Panc1 (cell line): ENCODE measurements at regions of chr5 and their contacts with region 1.

Region 1: GRCh38 chr5:159987031-159987674 is 21.8 kb upstream of the TTC1 start:
- DNase-seq: no peak
- ATAC-seq: peak; percentile 97
- H3K4me3 ChIP-seq: peak overlapping the region; percentile 40 to 63
- H3K27ac ChIP-seq: no peak overlapping the region
- H3K4me1 ChIP-seq: no peaks in the 10 kb centered on the region
- H3K27me3 ChIP-seq: no peaks in the 10 kb centered on the region; the same call in 1 of the 2 replicates
- CTCF ChIP-seq: peak; percentile 94

Region 2: GRCh38 chr5:159156426-159157238 is 830.5 kb before region 1 on chr5:
- CTCF ChIA-PET with region 1: no interaction called
- POLR2A ChIA-PET with region 1: no interaction called
- in situ Hi-C with region 1: no loop called
- intact Hi-C with region 1: loop called (anchors 10 kb)
- DNase-seq: peak; percentile 32
- ATAC-seq: peak; percentile 91
- H3K4me3 ChIP-seq: no peak overlapping the region
- H3K27ac ChIP-seq: no peak overlapping the region
- H3K4me1 ChIP-seq: no peaks in the 10 kb centered on the region
- H3K27me3 ChIP-seq: no peaks in the 10 kb centered on the region
- CTCF ChIP-seq: peak; percentile 84

Region 3: GRCh38 chr5:159331093-159331973 is 655.8 kb before region 1 on chr5:
- CTCF ChIA-PET with region 1: no interaction called
- POLR2A ChIA-PET with region 1: no interaction called
- in situ Hi-C with region 1: no loop called
- intact Hi-C with region 1: loop called (anchors 5 kb)
- DNase-seq: no peak
- ATAC-seq: peak; percentile 93
- H3K4me3 ChIP-seq: peak overlapping the region; percentile 42 to 49
- H3K27ac ChIP-seq: no peak overlapping the region
- H3K4me1 ChIP-seq: no peaks in the 10 kb centered on the region
- H3K27me3 ChIP-seq: peaks cover 11% of the 10 kb centered on the region
- CTCF ChIP-seq: peak; percentile 94

Region 4: GRCh38 chr5:159444441-159445082 is 542.6 kb before region 1 on chr5:
- CTCF ChIA-PET with region 1: no interaction called
- POLR2A ChIA-PET with region 1: no interaction called
- in situ Hi-C with region 1: no loop called
- intact Hi-C with region 1: loop called (anchors 2 kb)
- DNase-seq: peak; percentile 76
- ATAC-seq: peak; percentile 86
- H3K4me3 ChIP-seq: no peak overlapping the region
- H3K27ac ChIP-seq: no peak overlapping the region
- H3K4me1 ChIP-seq: no peaks in the 10 kb centered on the region; the same call in 1 of the 2 replicates
- H3K27me3 ChIP-seq: no peaks in the 10 kb centered on the region
- CTCF ChIP-seq: peak; percentile 69

Region 5: DNA sequence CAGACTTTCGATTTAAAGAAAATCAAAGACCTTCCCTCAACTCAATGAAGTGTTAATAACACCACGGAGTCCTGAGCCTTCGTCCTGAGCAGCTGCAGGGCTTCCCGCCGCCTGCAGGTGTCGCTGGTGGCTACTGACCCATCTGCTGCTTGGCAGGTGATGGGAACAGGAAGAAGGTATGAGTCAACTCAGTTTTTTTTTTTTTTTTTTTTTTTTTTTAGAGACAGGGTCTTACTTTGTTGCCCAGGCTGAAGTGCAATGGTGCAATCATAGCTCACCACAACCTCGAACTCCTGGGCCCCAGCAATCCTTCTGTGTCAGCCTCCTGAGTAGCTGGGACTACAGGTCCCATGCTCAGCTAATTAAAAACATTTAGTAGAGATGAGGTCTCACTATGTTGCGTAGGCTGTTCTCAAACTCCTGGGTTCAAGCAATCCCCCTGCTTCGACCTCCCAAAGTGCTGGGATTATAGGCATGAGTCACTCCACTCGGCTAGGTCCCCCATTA is 471.2 kb before region 1 on chr5:
- CTCF ChIA-PET with region 1: no interaction called
- POLR2A ChIA-PET with region 1: no interaction called
- in situ Hi-C with region 1: no loop called
- intact Hi-C with region 1: loop called (anchors 5 kb)
- DNase-seq: no peak
- ATAC-seq: 0 out of 2 replicates have a peak, but pooled peaks have one; percentile 75
- H3K4me3 ChIP-seq: no peak overlapping the region
- H3K27ac ChIP-seq: no peak overlapping the region
- H3K4me1 ChIP-seq: no peaks in the 10 kb centered on the region
- H3K27me3 ChIP-seq: no peaks in the 10 kb centered on the region
- CTCF ChIP-seq: peak; percentile 91

Region 6: DNA sequence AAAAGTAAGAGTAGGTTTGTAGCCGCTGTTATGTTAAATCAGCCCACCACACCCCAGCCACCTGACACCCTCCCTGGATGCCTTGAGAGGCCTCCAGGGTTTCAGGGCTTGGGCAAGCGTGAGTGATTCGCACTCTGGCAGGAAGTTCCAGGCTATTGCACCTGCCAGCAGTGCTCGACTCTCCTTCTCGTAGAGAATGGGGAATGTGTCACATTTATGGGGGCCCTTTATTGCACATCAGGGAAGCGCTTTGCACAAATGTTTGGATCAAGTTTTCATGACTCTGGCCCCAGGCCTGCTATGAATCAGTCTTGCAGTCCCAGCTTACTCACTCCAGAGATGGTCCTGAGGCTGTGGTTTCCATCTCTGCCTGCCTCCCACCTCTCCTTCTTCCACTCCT is 137.0 kb before region 1 on chr5:
- CTCF ChIA-PET with region 1: no interaction called
- POLR2A ChIA-PET with region 1: no interaction called
- in situ Hi-C with region 1: no loop called
- intact Hi-C with region 1: no loop called
- DNase-seq: no peak
- ATAC-seq: peak; percentile 84
- H3K4me3 ChIP-seq: no peak overlapping the region
- H3K27ac ChIP-seq: 0 out of 2 replicates have a peak overlapping the region, but pooled peaks have one; percentile 39
- H3K4me1 ChIP-seq: peaks cover 11% of the 10 kb centered on the region; the same call in 1 of the 2 replicates
- H3K27me3 ChIP-seq: no peaks in the 10 kb centered on the region
- CTCF ChIP-seq: no peak